ENCODE measurements at regions of chr20 and their contacts with region 1.

Region 1: DNA sequence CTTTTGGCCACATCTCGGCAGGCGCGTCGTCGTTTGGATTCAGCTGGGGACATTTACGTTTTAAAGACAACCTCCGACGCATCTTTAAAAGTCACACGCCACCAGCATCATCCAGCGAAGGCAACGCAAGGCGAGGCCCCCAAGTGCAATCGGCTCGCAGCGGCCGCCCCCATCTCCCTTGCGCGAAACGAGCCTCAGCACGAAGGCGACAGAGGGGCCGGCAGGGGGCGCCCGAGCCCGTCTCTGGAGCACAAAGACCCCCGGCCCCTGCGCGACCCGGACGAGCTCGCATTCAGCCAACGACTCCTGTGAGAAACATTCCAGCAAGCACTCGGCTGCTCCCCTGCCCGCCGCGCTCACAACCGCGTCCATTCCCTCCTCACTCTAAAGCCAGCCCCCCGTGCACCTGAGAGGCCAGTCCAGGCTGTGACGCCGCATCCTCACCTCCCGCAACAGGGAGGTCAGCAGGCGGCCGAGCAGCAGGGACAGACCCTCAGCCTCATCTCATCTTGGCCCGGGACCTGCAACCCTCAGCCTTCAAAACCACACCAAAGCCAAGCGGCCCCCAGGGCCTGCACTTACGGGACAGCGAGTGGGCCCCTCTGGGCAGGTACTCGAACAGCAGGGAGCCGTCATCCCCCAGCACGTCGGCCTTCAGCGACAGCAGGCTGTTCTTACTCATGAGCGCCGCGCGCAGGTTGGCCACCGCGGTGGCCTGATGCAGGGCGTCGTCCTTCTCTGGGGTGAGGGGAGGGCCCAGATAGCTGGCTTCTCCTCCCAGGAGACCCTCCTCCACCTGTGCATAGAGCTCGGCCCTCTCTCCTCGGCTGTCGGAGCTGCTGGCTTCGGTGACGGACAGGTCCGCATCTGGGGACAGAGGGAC is 35.8 kb downstream of the SLC2A4RG start:
- DNase-seq: no peak
- H3K27ac ChIP-seq: no peak overlapping the region
- CTCF ChIP-seq: peak; percentile 81

Region 2: DNA sequence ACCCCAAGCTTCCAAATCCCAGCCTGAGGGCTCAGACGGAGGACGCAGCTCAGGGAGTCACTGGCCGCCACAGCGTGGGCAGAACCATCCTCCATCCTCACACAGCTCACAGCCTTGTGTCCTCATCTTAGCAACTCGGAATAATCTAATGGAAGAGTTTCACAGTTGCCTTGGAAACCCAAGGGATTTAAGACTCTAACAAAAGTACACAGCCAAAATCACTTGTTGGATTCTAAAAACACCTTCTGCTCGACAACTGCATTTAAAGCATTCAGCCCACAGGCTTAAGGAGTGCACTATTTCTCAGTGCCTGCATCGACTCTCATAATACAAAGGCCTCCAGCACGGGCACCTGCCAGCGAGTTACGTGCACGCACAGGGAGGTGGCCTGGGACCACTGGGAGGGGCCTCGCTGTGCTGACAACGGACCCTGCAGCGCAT is 10.4 kb after region 1 on chr20:
- CTCF ChIA-PET with region 1: interaction called, 16 read pairs
- POLR2A ChIA-PET with region 1: interaction called, 3 read pairs
- DNase-seq: no peak
- H3K27ac ChIP-seq: no peak overlapping the region
- CTCF ChIP-seq: no peak